ENCODE measurements at regions of chr10 and their contacts with region 1.

Region 1: GRCh38 chr10:31318854-31319601 is at the start of gene ZEB1:
- DNase-seq: peak; percentile 86
- H3K4me3 Mint-ChIP-seq: peak within 1 kb of the TSS; percentile 97
- H3K27ac Mint-ChIP-seq: peak within 1 kb of the TSS; percentile 100
- H3K4me1 Mint-ChIP-seq: peaks cover 60% of the 10 kb centered on the region
- H3K27me3 Mint-ChIP-seq: no peaks in the 10 kb centered on the region
- total RNA-seq, gene ZEB1: 70.8 and 79.8 TPM in 2 replicates

Region 2: DNA sequence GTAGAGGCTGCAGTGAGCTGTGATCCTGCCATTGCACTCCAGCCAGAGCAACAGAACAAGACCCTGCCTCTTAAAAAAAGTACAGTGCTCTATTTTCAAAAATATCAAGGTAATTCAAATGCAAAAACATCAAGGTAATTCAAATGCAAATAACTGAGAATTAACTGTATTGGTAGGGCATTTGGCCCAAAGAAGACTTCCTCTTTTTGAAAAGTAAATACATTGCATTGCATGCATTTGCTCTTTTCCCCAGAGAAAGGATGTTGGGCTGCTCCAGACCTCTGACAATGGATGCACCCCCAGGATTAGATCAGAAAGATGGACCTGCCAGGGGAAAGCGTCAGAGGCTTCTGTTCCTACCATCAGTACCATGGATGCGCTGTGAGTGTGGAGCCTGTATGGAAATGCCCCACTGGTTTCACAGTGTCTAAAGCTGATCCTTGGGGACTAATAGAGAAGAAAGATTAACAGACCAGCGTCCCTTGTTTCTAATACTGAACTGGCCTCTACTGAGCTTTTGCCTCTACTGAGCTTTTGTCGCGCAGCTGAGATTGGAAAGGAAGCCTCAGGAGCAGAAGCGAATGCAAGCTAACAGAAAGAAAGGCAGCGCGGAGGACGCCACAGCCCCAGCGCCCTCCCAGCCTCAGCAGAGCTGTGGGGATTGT is 595.9 kb before region 1 on chr10:
- intact Hi-C with region 1: loop called (anchors 5 kb)
- DNase-seq: no peak
- H3K4me3 Mint-ChIP-seq: no peak overlapping the region
- H3K27ac Mint-ChIP-seq: no peak overlapping the region
- H3K4me1 Mint-ChIP-seq: peaks cover 11% of the 10 kb centered on the region
- H3K27me3 Mint-ChIP-seq: no peaks in the 10 kb centered on the region

Region 3: GRCh38 chr10:30999070-30999712 is 319.8 kb before region 1 on chr10:
- intact Hi-C with region 1: loop called (anchors 2 kb)
- DNase-seq: no peak
- H3K4me3 Mint-ChIP-seq: peak overlapping the region; percentile 77
- H3K27ac Mint-ChIP-seq: peak overlapping the region; percentile 88
- H3K4me1 Mint-ChIP-seq: peaks cover 35% of the 10 kb centered on the region
- H3K27me3 Mint-ChIP-seq: no peaks in the 10 kb centered on the region

Region 4: DNA sequence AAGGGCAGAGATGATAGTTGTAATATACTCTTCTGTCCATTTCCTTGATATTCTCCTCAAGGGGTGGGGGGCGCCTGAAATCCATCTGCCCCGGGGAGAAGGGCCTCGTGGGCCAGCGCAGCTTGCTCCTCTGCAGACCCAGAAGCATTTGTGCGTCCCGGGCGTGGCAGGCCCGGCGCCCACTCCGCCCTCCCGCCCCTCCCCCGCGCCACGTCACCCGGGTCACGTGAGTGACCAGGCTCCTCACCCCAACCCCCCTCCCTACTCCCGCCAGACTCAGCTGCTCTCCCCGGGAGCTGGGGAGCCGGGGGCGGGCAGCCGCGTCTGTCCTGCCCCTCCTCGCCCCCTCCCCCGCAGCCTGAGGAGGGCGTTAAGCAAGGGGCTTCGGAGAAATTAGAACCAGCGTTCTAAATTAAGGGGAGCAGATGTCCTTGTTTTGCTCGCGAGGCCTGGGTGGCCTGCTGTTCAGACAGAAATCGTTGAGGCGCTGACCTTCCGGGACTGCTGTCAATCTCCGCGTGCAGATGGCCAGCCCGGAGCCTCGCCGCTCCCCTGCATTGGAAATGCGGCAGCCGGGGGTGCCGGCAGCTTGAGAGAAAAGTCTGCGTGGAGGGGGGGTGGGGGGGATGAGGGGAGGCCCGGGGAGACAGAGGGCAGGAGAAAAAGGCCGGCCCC is 185.3 kb before region 1 on chr10:
- intact Hi-C with region 1: loop called (anchors 1 kb)
- DNase-seq: peak; percentile 40
- H3K4me3 Mint-ChIP-seq: peak overlapping the region; percentile 61
- H3K27ac Mint-ChIP-seq: peak overlapping the region; percentile 80
- H3K4me1 Mint-ChIP-seq: peaks cover 70% of the 10 kb centered on the region
- H3K27me3 Mint-ChIP-seq: no peaks in the 10 kb centered on the region

Region 5: DNA sequence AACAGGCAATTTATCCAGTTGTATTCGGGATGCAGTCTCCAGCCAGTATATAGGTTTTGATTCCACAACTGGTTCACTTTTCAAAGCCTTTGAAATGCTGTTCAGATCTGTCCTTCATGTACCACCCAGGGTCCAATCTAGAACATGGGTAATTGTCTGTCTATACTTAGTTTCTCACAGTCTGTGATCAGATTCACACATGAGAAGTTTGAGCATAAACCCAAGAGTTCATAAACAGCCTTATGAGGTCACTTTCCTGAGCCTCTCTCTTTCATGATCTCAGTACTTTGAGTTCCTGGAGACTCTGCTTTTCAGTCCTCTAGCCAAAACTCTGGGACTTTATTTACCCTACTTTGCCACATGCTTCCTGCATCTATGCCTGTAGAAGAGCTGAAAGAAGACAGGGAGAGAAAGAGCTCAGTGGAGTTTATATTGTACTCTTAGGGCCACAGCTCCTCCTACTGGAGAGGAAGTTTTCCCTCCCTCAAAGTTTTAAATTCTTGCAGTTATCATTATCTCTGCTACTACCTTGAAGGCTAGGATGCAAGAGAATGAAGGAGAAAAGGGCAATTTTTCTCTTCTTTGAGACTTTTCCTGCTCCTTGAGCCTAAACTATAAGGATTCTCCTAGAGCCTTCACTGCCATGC is 172.0 kb after region 1 on chr10:
- intact Hi-C with region 1: loop called (anchors 1 kb)
- DNase-seq: no peak
- H3K4me3 Mint-ChIP-seq: no peak overlapping the region
- H3K27ac Mint-ChIP-seq: no peak overlapping the region
- H3K4me1 Mint-ChIP-seq: peaks cover 19% of the 10 kb centered on the region
- H3K27me3 Mint-ChIP-seq: no peaks in the 10 kb centered on the region

Region 6: DNA sequence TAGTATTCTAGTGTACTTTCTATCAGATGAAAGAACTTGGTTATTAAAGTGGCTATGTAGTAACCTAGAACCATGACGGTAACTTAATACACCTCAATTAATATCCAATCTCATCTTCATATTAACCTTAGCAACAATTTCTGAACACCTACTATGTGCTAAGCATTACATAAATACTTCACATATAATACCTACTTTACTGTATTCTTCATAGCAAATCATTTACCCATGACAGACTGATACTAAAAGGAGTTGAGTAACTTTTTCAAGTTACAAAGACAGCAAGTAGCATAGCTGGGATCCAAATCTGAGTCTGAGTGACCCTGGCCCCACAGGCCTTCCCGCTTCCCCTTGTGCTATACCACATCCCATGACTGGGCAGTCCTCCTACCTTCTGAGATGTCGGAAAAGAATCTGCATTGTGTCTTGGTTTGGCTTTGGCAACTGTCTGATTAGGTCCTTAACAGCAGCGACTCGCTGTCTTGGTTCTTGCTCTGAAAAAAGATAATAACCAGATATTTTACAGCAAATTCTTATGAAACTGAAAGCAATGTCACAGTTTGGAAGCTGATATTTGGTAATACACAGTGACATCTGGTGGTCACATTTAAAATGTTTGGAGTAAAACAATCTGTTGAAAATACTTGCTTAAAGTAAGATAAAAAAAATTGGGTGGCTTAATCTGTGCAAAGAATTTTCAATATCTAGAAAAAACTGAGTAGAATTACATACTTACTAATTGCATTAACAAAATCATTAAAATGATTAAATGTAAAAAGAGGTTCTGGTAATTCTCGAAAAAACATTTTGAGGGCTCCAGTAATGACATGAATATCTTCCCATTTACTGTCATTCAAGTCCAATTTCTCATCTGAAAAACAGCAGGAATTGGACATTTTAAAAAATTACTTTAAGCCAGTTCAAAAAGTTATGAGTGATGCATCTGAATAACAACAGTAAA is 489.5 kb after region 1 on chr10:
- intact Hi-C with region 1: loop called (anchors 2 kb)
- DNase-seq: peak; percentile 2
- H3K4me3 Mint-ChIP-seq: peak overlapping the region; percentile 50
- H3K27ac Mint-ChIP-seq: peak overlapping the region; percentile 57
- H3K4me1 Mint-ChIP-seq: peaks cover 7% of the 10 kb centered on the region
- H3K27me3 Mint-ChIP-seq: peaks cover 3% of the 10 kb centered on the region